Colonic mucosa (tissue), 4 donors: ENCODE measurements at regions of chr20 and their contacts with region 1.

Region 1: GRCh38 chr20:39264506-39265172 is 302.5 kb downstream of the DHX35 start:
- DNase-seq: peak; percentile 35
- H3K4me3 ChIP-seq: no peak overlapping the region
- H3K27ac ChIP-seq: no peak overlapping the region
- H3K4me1 ChIP-seq: no peaks in the 10 kb centered on the region
- H3K27me3 ChIP-seq: no peaks in the 10 kb centered on the region
- CTCF ChIP-seq: peak; percentile 75

Region 2: GRCh38 chr20:39504710-39505094 is 240.1 kb after region 1 on chr20:
- intact Hi-C with region 1: no loop called
- DNase-seq: no peak
- H3K4me3 ChIP-seq: no peak overlapping the region
- H3K27ac ChIP-seq: no peak overlapping the region
- H3K4me1 ChIP-seq: no peaks in the 10 kb centered on the region
- H3K27me3 ChIP-seq: no peaks in the 10 kb centered on the region
- CTCF ChIP-seq: no peak

Region 3: DNA sequence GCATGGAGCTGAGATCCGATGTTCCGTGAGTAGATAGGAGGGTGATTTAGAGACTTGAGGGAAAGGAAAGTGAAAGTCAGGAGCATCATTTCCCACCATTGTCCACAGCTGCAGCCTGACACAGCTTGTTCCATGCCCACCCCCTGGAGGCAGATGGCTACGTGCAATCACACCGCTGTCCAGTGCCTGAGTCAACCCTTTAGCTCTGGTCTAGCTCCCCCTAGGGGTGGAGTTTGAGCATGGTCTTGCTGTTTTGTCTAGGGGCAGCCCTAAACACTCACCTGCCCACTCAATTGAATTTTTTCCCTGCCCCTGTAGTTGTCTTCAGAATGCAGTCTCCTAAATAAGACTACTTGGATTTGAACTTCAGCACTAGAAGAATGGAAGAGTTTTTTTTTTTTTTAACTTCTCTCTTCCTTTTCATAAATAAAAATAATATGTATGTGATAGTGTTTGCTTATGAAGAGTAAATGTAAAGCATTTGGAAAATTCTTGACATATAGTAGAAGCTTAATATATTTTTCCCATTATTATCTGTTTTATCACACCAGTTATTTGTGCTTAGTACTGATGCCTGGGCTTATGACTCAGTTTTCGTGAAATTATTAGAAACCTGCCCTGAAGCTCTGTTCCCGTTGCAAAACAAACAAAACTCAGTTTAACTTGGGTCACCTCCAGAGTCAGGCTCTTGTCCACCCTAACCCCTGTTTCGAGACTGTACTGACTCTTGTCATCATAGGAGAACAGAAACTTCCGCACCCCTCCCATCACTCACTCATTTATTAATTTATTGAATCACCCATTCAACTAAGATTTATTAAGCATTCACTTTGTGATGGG is 609.6 kb after region 1 on chr20:
- intact Hi-C with region 1: loop called (anchors 2 kb)
- DNase-seq: peak; percentile 79
- H3K4me3 ChIP-seq: no peak overlapping the region
- H3K27ac ChIP-seq: no peak overlapping the region
- H3K4me1 ChIP-seq: no peaks in the 10 kb centered on the region
- H3K27me3 ChIP-seq: no peaks in the 10 kb centered on the region
- CTCF ChIP-seq: peak; percentile 72

Region 4: DNA sequence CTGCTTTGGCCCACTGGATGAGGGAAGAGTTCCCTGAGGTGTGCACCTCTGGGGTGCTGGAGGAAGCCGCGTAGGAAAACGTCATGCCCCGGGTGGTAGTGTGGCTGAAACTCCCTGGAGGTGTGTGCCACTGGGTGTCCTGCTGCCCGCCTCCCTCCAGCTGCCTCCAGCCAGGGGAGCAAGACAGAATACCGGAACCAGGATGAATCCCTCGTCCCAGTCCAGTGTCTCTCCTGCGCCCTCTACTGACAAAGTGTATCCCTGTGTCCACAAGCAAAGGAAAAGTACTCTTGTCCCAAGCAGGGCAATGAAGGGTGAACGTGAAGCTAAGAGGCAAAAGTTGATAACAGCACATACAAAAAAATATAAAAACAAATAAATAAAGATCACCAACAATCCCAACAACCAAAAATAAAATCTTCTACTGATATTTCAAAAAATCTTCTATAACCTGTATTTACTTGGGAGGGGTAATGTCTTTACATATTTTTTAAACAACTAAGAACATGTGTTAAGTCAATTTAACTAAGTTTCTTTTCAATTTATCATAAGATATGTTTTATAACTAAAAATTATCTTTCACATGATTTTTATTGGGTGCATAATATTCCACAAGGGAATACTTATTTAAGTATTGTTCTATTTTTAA is 986.8 kb after region 1 on chr20:
- intact Hi-C with region 1: loop called (anchors 5 kb)
- DNase-seq: peak; percentile 50
- H3K4me3 ChIP-seq: no peak overlapping the region
- H3K27ac ChIP-seq: no peak overlapping the region
- H3K4me1 ChIP-seq: no peaks in the 10 kb centered on the region
- H3K27me3 ChIP-seq: no peaks in the 10 kb centered on the region
- CTCF ChIP-seq: peak; percentile 30

Region 5: DNA sequence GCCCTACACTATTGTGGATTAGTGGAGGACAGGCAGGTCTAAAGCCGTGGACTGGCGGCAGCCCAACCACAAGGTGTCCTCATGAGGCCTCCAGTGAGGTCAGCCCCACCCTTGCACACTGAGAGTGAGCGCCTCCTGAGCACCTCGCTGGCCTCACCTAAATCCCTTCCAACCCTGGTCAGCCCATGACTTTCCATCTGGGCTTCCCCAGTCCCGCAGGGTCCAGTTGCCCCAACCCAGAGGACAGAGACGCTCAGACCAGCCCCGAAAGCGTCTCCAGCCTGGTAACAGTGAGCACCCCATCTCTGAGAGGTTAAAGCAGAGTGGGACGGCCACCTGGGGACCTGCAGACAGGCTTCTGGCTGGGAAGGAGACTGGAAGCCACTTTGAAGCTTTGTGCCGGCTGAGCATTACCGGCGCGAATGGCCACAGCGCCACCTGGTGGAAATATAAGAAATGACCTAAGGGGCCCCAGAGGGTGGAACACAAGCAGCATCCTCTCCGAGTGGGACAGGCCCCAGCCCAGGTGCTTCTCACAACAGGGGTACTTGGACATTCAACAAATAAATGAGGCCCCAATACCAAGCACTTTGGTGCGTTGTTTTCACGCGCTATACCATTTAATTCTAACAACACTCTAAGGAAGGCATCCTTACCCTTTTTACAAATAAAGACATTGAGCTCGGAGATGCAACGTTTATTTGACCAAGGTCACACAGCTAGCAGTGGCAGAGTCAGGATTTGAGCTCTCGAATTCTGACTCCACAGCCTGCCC is 1698.3 kb after region 1 on chr20:
- intact Hi-C with region 1: loop called (anchors 10 kb)
- DNase-seq: peak; percentile 74
- H3K4me3 ChIP-seq: no peak overlapping the region
- H3K27ac ChIP-seq: no peak overlapping the region
- H3K4me1 ChIP-seq: no peaks in the 10 kb centered on the region
- H3K27me3 ChIP-seq: no peaks in the 10 kb centered on the region
- CTCF ChIP-seq: peak; percentile 87